GM12878 (cell line): ENCODE measurements at regions of chr1 and their contacts with region 1.

Region 1: GRCh38 chr1:43529206-43529731 is 1.4 kb upstream of the PTPRF start:
- DNase-seq: peak; percentile 30
- ATAC-seq: peak; percentile 91
- H3K4me3 ChIP-seq: no peak overlapping the region
- H3K27ac ChIP-seq: no peak overlapping the region
- H3K4me1 ChIP-seq: no peaks in the 10 kb centered on the region
- H3K27me3 ChIP-seq: peaks cover 7 to 11% of the 10 kb centered on the region in 2 experiments
- CTCF ChIP-seq: peak; percentile 91 to 95 (median 95); a peak in 5 of 6 replicates
- EP300 ChIP-seq: no peak
- POLR2A ChIP-seq: no peak
- RAD21 ChIP-seq: peak; percentile 92

Region 2: DNA sequence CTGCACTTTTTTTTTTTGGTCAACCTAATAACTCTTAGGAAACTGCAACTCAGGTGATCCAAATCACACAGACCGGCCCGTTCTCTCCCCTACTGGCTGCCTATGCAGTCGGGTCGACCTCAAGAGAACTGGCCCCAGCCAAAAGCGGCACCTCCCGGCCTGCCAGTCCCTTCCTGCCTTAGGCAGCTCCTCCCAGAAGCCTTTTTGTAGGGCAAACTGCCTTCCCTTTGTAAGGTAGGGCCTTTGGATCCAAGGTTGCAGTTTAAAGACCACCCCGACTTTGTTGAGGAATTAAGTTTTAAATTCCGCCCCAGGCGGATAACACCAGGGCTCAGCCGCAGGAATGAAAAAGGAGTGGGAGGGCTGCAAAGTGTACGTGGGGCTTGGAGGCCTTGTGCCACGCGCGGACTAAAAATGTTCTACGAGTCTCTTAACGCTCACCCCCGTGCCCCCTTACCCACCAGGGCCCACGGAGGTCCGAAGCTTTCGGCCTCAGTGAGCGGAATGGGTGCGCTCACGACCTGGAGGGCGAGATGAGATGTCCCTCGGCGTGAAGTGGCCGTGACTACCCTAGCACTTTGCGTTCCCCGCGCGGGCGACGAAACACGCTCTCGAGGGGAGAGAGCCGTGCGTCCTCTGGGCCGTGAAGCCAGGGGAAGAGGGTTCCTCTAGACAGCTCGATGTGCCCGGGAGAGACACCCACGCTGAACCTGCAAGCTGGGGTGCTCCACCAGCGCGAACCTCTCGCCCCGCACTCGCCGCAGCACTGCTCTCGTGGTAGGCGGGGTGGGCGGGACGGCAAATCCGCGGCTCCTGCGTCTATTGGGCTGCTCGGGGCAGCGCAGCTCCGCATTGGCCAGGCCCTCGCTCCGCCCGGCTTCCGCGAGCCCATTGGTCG is 177.6 kb after region 1 on chr1:
- CTCF ChIA-PET with region 1: interaction called, 3 read pairs
- POLR2A ChIA-PET with region 1: interaction called, 4 read pairs
- RAD21 ChIA-PET with region 1: no interaction called
- SMC1A ChIA-PET with region 1: no interaction called
- in situ Hi-C with region 1: no loop called
- intact Hi-C with region 1: loop called (anchors 5 kb)
- DNase-seq: peak; percentile 67
- ATAC-seq: peak; percentile 97
- H3K4me3 ChIP-seq: peak overlapping the region; percentile 78
- H3K27ac ChIP-seq: peak overlapping the region; percentile 71
- H3K4me1 ChIP-seq: peaks cover 3% of the 10 kb centered on the region; the same call in 1 of the 2 replicates
- H3K27me3 ChIP-seq: no peaks in the 10 kb centered on the region
- CTCF ChIP-seq: no peak
- EP300 ChIP-seq: 0 out of 4 replicates have a peak, but pooled peaks of 1 of the 2 experiments have one; percentile 22
- POLR2A ChIP-seq: peak; percentile 96
- RAD21 ChIP-seq: no peak

Region 3: GRCh38 chr1:44044071-44044801 is 515.0 kb after region 1 on chr1:
- CTCF ChIA-PET with region 1: interaction called, 6 read pairs
- POLR2A ChIA-PET with region 1: no interaction called
- RAD21 ChIA-PET with region 1: no interaction called
- SMC1A ChIA-PET with region 1: interaction called, 3 read pairs
- in situ Hi-C with region 1: loop called (anchors 5 kb)
- intact Hi-C with region 1: loop called (anchors 2 kb)
- DNase-seq: no peak
- ATAC-seq: no peak
- H3K4me3 ChIP-seq: no peak overlapping the region
- H3K27ac ChIP-seq: no peak overlapping the region
- H3K4me1 ChIP-seq: peaks cover 9% of the 10 kb centered on the region; the same call in 1 of the 2 replicates
- H3K27me3 ChIP-seq: no peaks in the 10 kb centered on the region
- CTCF ChIP-seq: no peak
- EP300 ChIP-seq: no peak
- POLR2A ChIP-seq: no peak
- RAD21 ChIP-seq: no peak